Lower leg skin (tissue), 4 donors: ENCODE measurements at regions of chr2 and their contacts with region 1.

Region 1: GRCh38 chr2:37552366-37552765 is 119.1 kb downstream of the CDC42EP3 start:
- DNase-seq: no peak
- H3K4me3 ChIP-seq: no peak overlapping the region
- CTCF ChIP-seq: no peak
- POLR2A ChIP-seq: no peak

Region 2: DNA sequence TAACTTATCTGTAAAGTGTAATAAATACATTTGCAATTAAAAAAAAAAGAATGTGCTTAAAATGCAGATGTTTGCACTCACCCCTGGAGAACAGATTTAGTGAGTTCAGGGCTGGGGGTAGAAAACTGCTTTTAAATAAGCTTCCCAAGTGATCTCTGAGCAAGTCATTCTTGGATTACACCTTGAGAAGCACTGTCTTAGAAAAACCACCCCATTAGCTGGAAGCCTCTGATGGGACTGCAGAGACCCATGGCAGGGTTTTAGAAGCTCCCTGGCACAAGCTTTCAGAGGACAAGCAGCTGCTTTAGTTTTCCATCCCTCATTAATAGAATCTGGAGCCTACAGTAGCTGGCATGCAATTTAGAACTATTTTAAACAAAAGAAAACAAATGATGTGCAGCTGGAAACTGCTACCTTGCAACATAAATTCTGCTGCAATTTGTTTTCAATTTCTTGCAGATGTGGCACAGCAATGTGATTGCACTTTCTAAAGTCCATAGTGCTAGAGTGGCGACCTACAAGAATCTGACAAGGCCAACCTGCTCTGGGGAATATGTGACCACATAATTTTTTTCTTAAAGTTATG is 22.4 kb before region 1 on chr2:
- intact Hi-C with region 1: loop called (anchors 2 kb)
- DNase-seq: no peak
- H3K4me3 ChIP-seq: no peak overlapping the region
- CTCF ChIP-seq: no peak
- POLR2A ChIP-seq: no peak